AG04450 (cell line): ENCODE measurements at regions of chr1 and their contacts with region 1.

Region 1: DNA sequence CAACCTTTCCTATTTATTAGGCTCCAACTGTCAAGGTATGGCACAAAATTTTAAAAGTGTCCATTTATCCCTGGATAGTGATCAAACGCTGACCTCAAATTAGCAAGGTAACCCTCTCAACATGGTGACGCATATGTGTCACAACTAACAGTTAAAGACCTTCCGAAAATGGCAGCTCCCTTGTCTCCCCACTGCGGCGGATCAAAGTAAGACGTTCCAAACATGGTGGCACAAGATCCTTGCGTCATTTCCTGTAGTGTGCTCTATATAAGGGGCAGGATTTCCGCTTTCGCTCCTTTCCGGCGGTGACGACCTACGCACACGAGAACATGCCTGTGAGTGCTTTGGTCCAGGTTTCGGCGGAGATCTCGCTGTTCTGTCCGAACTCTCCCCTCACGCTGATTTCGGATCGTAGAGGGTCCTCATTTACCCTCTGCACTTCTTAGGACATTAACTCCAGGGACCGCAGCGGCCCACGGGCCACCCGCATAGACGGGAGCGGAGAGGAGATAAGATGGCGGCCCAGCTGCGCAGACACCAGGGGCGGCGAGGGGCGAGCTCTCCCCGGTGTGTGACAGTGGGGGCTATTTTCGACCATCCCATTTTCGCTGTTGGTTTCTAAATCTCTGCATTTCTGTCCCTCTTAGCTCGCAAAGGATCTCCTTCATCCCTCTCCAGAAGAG is at the start of gene RPS27:
- DNase-seq: peak; percentile 96
- H3K4me3 ChIP-seq: peak within 1 kb of the TSS; percentile 88
- H3K27ac ChIP-seq: peak within 1 kb of the TSS; percentile 83
- H3K27me3 ChIP-seq: no peaks in the 10 kb centered on the region
- CTCF ChIP-seq: no peak
- polyA plus RNA-seq, gene RPS27: 6,731 and 8,507 TPM in 2 replicates

Region 2: GRCh38 chr1:153670859-153671627 is 319.6 kb before region 1 on chr1 and contains the start of gene ILF2:
- CTCF ChIA-PET with region 1: interaction called, 13 read pairs
- POLR2A ChIA-PET with region 1: interaction called, 6 read pairs
- DNase-seq: peak; percentile 99
- H3K4me3 ChIP-seq: peak within 1 kb of the TSS; percentile 95
- H3K27ac ChIP-seq: peak within 1 kb of the TSS; percentile 84
- H3K27me3 ChIP-seq: no peaks in the 10 kb centered on the region
- CTCF ChIP-seq: peak; percentile 30
- polyA plus RNA-seq, gene ILF2: 308 and 326 TPM in 2 replicates

Region 3: GRCh38 chr1:153796791-153797659 is 193.6 kb before region 1 on chr1:
- CTCF ChIA-PET with region 1: interaction called, 44 read pairs
- POLR2A ChIA-PET with region 1: interaction called, 9 read pairs
- DNase-seq: peak; percentile 21
- H3K4me3 ChIP-seq: no peak overlapping the region
- H3K27ac ChIP-seq: no peak overlapping the region
- H3K27me3 ChIP-seq: no peaks in the 10 kb centered on the region
- CTCF ChIP-seq: peak; percentile 82

Region 4: GRCh38 chr1:153946622-153947241 is 43.9 kb before region 1 on chr1 and contains the start of gene DENND4B:
- CTCF ChIA-PET with region 1: interaction called, 6 read pairs
- POLR2A ChIA-PET with region 1: interaction called, 11 read pairs
- DNase-seq: no peak
- H3K4me3 ChIP-seq: peak within 1 kb of the TSS; percentile 86
- H3K27ac ChIP-seq: peak within 1 kb of the TSS; percentile 61
- H3K27me3 ChIP-seq: no peaks in the 10 kb centered on the region
- CTCF ChIP-seq: peak; percentile 90
- polyA plus RNA-seq, gene DENND4B: 10.3 and 13.3 TPM in 2 replicates

Region 5: DNA sequence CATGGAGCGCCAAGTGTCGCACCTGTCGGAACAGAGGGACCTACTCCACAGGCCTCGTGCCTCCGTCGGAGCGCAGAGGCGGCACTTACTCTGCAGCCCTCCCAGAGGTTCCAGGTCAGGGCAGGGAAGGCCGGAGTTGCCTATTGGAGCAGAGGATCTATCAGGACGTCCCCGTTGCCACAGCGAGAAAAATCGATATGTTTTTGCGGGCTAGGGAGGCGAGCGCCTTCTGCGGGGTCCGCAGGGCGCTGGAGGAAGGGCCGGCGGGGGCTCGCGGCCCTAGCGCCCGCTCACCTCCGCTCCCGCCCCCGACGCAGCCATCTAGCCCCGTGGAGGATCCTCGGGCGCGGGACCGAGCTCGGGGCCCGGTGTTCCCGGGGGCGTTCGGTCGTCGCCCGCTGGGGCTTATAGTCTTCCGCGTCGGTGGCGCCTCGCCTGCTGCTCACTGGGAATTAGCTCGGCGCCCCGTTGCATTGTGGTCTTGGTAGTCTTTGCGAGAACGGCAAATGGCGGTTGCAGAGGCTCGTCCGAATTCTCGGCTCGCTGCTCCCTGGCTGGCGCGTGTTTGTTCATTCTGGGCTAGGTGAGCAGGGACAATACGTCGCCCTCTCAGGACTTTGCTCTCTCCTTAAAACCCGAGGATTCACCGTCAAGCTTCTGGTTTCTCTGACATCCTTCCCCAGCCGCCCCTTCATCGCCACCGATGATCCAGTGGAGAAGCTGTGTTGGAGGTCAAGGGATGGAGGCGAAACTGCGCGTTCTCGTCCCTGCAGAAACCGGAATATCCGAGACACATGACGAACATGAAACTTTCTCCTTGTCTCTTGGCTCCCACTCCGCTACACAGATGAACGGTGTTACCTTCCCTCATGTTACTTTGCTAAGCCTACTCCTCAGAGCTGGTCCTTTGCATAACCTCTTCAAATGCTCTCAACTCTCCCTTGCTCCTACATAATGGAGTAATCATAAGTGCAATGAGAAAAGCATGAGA is 13.1 kb before region 1 on chr1 and contains the start of gene JTB:
- CTCF ChIA-PET with region 1: interaction called, 18 read pairs
- POLR2A ChIA-PET with region 1: interaction called, 35 read pairs
- DNase-seq: no peak
- H3K4me3 ChIP-seq: peak within 1 kb of the TSS; percentile 94
- H3K27ac ChIP-seq: peak within 1 kb of the TSS; percentile 70
- H3K27me3 ChIP-seq: no peaks in the 10 kb centered on the region
- CTCF ChIP-seq: no peak
- polyA plus RNA-seq, gene JTB: 159 and 160 TPM in 2 replicates

Region 6: DNA sequence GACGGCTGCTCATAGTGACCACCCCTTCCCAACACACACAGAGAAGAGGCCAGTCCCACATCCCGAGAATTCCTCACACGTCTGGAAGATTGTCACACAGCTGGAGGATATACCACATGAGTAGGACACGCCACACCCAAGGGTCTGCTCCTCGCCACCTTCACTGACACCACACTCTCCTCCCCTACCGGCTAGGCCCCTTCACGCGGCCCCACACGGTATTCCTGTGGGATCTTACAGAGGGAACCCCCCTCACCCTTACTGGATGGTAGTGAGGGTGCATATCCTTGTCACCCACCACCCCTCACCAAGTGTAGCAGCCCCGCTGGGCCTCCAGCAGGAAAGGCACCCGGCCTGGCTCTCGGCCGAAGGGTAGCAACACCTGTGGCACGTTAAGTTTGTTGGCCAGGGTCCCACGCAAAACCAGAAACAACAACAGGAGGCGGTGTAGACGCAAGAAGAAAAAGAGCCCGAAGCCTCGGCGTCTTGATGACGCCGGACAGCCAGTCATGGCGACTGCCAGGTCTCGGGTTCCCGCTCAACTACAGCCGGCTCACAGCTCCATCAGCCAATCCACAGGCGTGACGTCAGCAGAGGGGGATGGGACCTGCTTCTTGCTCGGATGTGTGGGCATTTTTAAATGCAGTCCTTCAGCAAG is 164.1 kb after region 1 on chr1 and contains the start of gene NUP210L:
- CTCF ChIA-PET with region 1: no interaction called
- POLR2A ChIA-PET with region 1: interaction called, 11 read pairs
- DNase-seq: peak; percentile 4
- H3K4me3 ChIP-seq: no peak within 1 kb of the TSS
- H3K27ac ChIP-seq: peak within 1 kb of the TSS; percentile 39
- H3K27me3 ChIP-seq: no peaks in the 10 kb centered on the region
- CTCF ChIP-seq: no peak
- polyA plus RNA-seq, gene NUP210L: 0.01 TPM in 1 of 2 replicates, not detected in the other

Region 7: GRCh38 chr1:154220071-154220969 is 229.7 kb after region 1 on chr1 and contains the start of gene UBAP2L:
- CTCF ChIA-PET with region 1: no interaction called
- POLR2A ChIA-PET with region 1: interaction called, 20 read pairs
- DNase-seq: peak; percentile 98
- H3K4me3 ChIP-seq: peak within 1 kb of the TSS; percentile 95
- H3K27ac ChIP-seq: peak within 1 kb of the TSS; percentile 99
- H3K27me3 ChIP-seq: no peaks in the 10 kb centered on the region
- CTCF ChIP-seq: no peak
- polyA plus RNA-seq, gene UBAP2L: 173 and 177 TPM in 2 replicates

Region 8: DNA sequence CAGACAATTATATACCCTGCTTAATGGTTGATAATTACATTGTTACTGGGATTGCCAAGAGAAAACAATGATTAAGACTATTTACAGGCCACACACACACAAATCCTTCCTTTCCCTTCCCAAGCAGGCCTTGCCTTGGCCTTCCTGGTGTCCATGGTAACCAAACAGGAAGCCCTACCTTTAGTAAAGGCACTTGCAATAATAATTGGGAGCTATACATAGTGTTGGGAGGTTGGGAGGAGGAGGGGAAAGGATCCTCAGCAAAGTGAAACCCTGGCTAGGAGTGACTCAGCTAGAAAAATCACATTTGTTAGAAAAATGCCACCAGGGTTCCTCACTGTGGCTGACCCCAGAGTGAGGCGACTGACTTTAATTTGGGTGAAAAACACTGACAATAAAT is 739.6 kb after region 1 on chr1:
- CTCF ChIA-PET with region 1: no interaction called
- POLR2A ChIA-PET with region 1: no interaction called
- DNase-seq: no peak
- H3K4me3 ChIP-seq: no peak overlapping the region
- H3K27ac ChIP-seq: no peak overlapping the region
- H3K27me3 ChIP-seq: peaks cover 14% of the 10 kb centered on the region
- CTCF ChIP-seq: no peak